ENCODE measurements at regions of chr3 and their contacts with region 1.

Region 1: DNA sequence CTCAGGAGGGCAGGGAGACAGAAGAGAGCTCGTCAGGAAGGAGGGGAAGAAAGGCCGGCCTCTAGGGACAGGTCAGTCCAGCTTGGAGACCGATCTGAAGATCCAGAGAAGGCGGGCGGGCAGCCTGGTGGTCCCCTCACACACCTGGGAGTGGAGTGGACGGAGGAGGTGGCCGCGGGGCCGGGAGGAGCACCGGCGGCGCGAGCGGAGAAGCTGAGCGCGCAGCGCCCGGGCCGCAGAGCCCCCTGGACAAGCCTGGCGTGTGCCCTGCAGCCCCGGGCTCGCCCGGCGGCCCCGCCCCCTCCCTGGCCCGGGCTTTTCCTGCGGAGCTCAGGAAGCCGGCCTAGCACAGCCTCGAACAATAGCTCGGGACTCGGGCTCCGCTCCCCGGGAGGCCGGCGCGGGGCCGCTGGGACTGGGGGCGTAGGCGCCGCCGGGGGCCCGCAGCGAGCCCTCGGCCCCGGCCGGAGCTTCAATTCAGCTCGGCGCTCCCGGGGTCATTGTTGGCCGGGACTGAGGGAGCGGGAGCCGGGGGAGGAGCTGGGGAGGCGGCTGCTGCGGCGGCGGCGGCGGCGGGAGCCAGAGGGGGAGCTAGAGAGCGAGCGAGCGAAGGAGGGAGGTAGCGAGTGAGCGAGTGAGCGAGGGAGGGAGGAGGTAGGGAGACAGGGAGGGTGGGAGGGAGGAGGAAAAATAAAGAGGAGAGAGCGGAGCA is 40.9 kb upstream of the ROPN1 start:
- DNase-seq: peak; percentile 78 to 89
- ATAC-seq: peak; percentile 95 to 96
- H3K4me3 ChIP-seq: peak overlapping the region; percentile 65
- H3K27ac ChIP-seq: peak overlapping the region; percentile 88 to 97
- H3K4me1 ChIP-seq: peaks cover 8% of the 10 kb centered on the region; the same call in 1 of the 3 replicates
- CTCF ChIP-seq: peak; percentile 64
- EP300 ChIP-seq: no peak
- POLR2A ChIP-seq: peak; percentile 19
- RAD21 ChIP-seq: peak; percentile 15 to 27; a peak in 1 of 5 replicates

Region 2: GRCh38 chr3:123997543-123997942 is 35.3 kb before region 1 on chr3:
- CTCF ChIA-PET with region 1: no interaction called
- POLR2A ChIA-PET with region 1: no interaction called
- DNase-seq: no peak
- ATAC-seq: no peak
- H3K4me3 ChIP-seq: no peak overlapping the region
- H3K27ac ChIP-seq: no peak overlapping the region
- H3K4me1 ChIP-seq: no peaks in the 10 kb centered on the region
- CTCF ChIP-seq: no peak
- EP300 ChIP-seq: no peak
- POLR2A ChIP-seq: no peak
- RAD21 ChIP-seq: no peak

Region 3: DNA sequence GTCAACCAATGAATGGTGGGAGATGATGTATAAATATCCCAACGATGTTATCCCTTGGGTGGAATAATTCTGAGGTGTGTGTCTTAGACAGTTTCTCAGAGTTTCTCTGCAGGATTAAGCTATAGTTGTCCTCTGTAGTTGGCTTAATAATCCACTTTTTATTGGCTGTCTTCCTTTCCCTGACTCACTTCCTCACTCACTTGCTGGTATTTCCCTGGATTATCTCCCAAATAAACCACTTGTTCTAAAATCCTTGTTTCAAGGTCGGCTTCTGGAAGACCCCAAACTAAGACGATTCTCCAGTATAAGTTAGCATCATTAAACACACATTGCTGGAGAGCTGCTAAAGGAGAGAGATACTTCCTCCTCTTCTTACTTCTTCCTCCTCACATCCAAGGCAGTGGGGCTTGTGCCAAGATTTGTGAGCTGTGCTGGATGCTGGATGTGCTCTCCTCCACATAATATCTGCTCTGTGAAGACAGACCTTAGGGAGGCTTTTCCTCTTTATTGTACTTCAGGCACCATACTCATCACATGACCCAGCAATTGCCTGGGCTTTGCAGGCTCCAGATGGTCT is 18.4 kb before region 1 on chr3:
- CTCF ChIA-PET with region 1: interaction called, 44 read pairs
- POLR2A ChIA-PET with region 1: interaction called, 3 read pairs
- DNase-seq: no peak
- ATAC-seq: no peak
- H3K4me3 ChIP-seq: no peak overlapping the region
- H3K27ac ChIP-seq: no peak overlapping the region
- H3K4me1 ChIP-seq: no peaks in the 10 kb centered on the region
- CTCF ChIP-seq: no peak
- EP300 ChIP-seq: no peak
- POLR2A ChIP-seq: no peak
- RAD21 ChIP-seq: no peak

Region 4: GRCh38 chr3:124044956-124045355 is 12.2 kb after region 1 on chr3:
- CTCF ChIA-PET with region 1: interaction called, 10 read pairs
- POLR2A ChIA-PET with region 1: no interaction called
- DNase-seq: no peak
- ATAC-seq: no peak
- H3K4me3 ChIP-seq: no peak overlapping the region
- H3K27ac ChIP-seq: no peak overlapping the region
- H3K4me1 ChIP-seq: no peaks in the 10 kb centered on the region
- CTCF ChIP-seq: no peak
- EP300 ChIP-seq: no peak
- POLR2A ChIP-seq: no peak
- RAD21 ChIP-seq: no peak

Region 5: DNA sequence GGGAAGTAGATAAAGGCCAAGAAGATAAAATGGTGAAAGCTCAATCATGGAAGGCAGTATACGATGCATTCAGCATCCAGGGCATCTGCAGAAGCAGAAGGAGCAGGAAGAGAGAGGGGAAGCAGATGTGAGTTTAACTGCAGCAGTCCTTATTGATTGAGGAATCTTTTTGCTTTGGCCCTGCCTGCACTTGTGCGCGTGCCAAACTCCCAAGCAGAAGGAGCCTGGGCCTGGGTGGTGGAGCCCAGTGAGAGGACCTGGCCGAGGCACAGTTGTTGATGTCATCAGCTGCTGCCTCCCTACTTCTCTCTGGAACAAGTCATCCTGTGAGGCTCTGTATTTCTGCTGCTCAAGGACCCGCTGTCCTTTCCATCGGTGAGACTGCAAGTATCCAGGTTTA is 24.6 kb after region 1 on chr3:
- CTCF ChIA-PET with region 1: interaction called, 16 read pairs
- POLR2A ChIA-PET with region 1: no interaction called
- DNase-seq: no peak
- ATAC-seq: no peak
- H3K4me3 ChIP-seq: no peak overlapping the region
- H3K27ac ChIP-seq: no peak overlapping the region
- H3K4me1 ChIP-seq: no peaks in the 10 kb centered on the region
- CTCF ChIP-seq: no peak
- EP300 ChIP-seq: no peak
- POLR2A ChIP-seq: no peak
- RAD21 ChIP-seq: no peak

Region 6: GRCh38 chr3:124078953-124079911 is 46.4 kb after region 1 on chr3:
- CTCF ChIA-PET with region 1: interaction called, 23 read pairs
- POLR2A ChIA-PET with region 1: no interaction called
- DNase-seq: peak; percentile 19 to 35
- ATAC-seq: peak in 1 of 2 experiments; percentile 66; a peak in 3 of 6 replicates
- H3K4me3 ChIP-seq: no peak overlapping the region
- H3K27ac ChIP-seq: no peak overlapping the region
- H3K4me1 ChIP-seq: no peaks in the 10 kb centered on the region
- CTCF ChIP-seq: peak; percentile 90
- EP300 ChIP-seq: no peak
- POLR2A ChIP-seq: no peak
- RAD21 ChIP-seq: peak; percentile 78 to 80